HepG2 (cell line): ENCODE measurements at regions of chr22 and their contacts with region 1.

Region 1: DNA sequence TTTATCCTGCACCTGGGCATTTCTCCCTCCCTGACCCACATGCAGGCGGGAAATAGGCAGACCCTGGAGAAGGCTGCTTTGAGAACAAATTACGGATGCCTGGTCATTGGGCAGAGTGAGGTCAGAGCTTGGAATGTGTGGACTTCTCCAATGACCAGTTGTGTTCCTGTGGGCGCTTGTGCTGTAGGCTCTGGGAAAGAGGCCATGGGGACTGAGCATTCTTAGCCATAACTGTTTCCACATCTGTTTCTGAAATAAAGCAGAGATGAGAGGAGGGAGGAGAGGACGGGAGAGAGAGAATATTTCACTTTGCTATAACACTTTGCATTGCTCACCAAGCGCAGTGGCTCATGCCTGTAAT is 11.2 kb upstream of the TMEM184B start:
- DNase-seq: peak; percentile 65
- ATAC-seq: peak; percentile 76
- H3K4me3 ChIP-seq: peak overlapping the region in 1 of 3 experiments; percentile 55; a peak in 1 of 6 replicates
- H3K27ac ChIP-seq: peak overlapping the region; percentile 79
- H3K4me1 ChIP-seq: peaks cover 54% of the 10 kb centered on the region
- H3K27me3 ChIP-seq: no peaks in the 10 kb centered on the region
- CTCF ChIP-seq: no peak
- EP300 ChIP-seq: no peak
- POLR2A ChIP-seq: no peak
- RAD21 ChIP-seq: no peak

Region 2: GRCh38 chr22:38317122-38317994 is 33.3 kb after region 1 on chr22 and contains the start of gene CSNK1E:
- CTCF ChIA-PET with region 1: no interaction called
- POLR2A ChIA-PET with region 1: interaction called, 10 read pairs
- in situ Hi-C with region 1: no loop called
- intact Hi-C with region 1: no loop called
- DNase-seq: no peak
- ATAC-seq: peak; percentile 33
- H3K4me3 ChIP-seq: peak within 1 kb of the TSS; percentile 64 to 86 (median 77)
- H3K27ac ChIP-seq: peak within 1 kb of the TSS; percentile 89
- H3K4me1 ChIP-seq: peaks cover 70% of the 10 kb centered on the region
- H3K27me3 ChIP-seq: no peaks in the 10 kb centered on the region; a peak in 2 of 5 replicates
- CTCF ChIP-seq: no peak
- EP300 ChIP-seq: no peak
- POLR2A ChIP-seq: peak in 1 of 2 experiments; percentile 55; a peak in 2 of 4 replicates
- RAD21 ChIP-seq: no peak
- total RNA-seq, gene CSNK1E: 19.8 and 34.7 TPM in 2 replicates